ENCODE measurements at regions of chr13 and their contacts with region 1.

Region 1: GRCh38 chr13:77079902-77080413 is 53.0 kb upstream of the FBXL3 start:
- DNase-seq: no peak
- H3K4me3 Mint-ChIP-seq: no peak overlapping the region
- H3K27ac Mint-ChIP-seq: no peak overlapping the region
- H3K4me1 Mint-ChIP-seq: peaks cover 2% of the 10 kb centered on the region
- H3K27me3 Mint-ChIP-seq: no peaks in the 10 kb centered on the region

Region 2: GRCh38 chr13:77065461-77066147 is 14.4 kb before region 1 on chr13:
- intact Hi-C with region 1: loop called (anchors 1 kb)
- DNase-seq: no peak
- H3K4me3 Mint-ChIP-seq: no peak overlapping the region
- H3K27ac Mint-ChIP-seq: no peak overlapping the region
- H3K4me1 Mint-ChIP-seq: no peaks in the 10 kb centered on the region
- H3K27me3 Mint-ChIP-seq: no peaks in the 10 kb centered on the region

Region 3: DNA sequence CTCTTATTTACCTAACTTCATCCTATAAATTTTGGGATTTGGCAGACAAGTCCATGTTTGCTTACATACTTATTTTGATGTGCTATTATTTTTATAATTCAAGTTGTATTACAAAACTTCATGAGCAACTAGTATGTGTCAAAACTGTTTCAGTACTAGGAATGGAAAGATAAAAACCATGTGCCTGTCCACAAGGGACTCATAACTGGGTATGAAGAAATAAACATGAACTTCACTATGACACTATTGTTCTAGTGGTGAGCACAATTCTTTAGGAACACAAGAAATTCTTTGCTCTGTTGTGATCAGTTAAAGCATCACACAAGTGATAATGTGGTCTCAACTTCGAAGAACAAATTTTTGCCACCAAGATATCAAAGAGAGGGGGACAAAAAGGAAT is 44.5 kb after region 1 on chr13:
- intact Hi-C with region 1: no loop called
- DNase-seq: no peak
- H3K4me3 Mint-ChIP-seq: no peak overlapping the region
- H3K27ac Mint-ChIP-seq: no peak overlapping the region
- H3K4me1 Mint-ChIP-seq: peaks cover 4% of the 10 kb centered on the region
- H3K27me3 Mint-ChIP-seq: no peaks in the 10 kb centered on the region